ENCODE measurements at regions of chr2 and their contacts with region 1.

Region 1: DNA sequence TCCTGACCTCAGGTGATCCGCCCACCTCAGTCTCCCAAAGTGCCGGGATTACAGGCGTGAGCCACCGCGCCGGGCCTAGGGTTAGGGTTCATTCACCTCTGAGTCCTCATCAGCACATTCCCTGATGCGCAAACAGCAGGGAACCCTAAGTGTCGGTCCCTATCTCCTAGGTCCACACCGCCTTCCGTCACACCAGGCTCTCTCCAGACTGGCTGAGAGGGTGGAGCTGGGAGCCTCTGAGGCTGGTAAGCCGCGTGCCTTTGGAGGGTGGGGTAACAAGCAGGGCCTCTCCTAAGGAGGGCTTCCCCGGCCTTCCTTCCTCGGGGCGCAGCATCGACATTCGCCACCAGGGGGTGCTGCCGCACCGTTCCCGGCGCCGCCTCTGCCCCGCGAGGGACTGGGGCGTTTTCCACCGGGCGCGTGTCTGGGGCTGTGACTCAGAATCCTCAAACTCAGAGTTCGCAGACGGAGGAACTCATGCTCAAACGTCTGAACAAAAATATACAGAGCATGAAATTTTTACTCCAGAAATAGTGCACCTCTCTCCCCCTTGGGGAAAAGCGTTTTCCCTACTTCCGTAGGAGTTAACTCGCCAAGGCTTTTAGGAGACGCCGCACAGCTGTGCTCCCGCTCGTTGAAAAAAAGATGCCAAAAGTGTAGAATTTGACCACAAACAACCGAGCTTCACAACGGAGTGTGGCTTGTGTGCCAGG is 63.9 kb upstream of the ASAP2 start:
- DNase-seq: peak; percentile 72
- ATAC-seq: peak; percentile 94
- H3K4me3 ChIP-seq: peak overlapping the region; percentile 30 to 38
- H3K27ac ChIP-seq: no peak overlapping the region
- H3K4me1 ChIP-seq: peaks cover 18 to 46% of the 10 kb centered on the region in 2 experiments; a peak in 3 of 4 replicates
- H3K27me3 ChIP-seq: no peaks in the 10 kb centered on the region
- CTCF ChIP-seq: peak in 2 of 3 experiments; percentile 90 to 98; a peak in 4 of 6 replicates
- POLR2A ChIP-seq: no peak
- RAD21 ChIP-seq: no peak

Region 2: GRCh38 chr2:7203055-7203467 is 1939.6 kb before region 1 on chr2:
- CTCF ChIA-PET with region 1: no interaction called
- POLR2A ChIA-PET with region 1: no interaction called
- RAD21 ChIA-PET with region 1: no interaction called
- intact Hi-C with region 1: loop called (anchors 10 kb)
- DNase-seq: peak; percentile 24
- ATAC-seq: peak; percentile 71
- H3K4me3 ChIP-seq: no peak overlapping the region
- H3K27ac ChIP-seq: no peak overlapping the region
- H3K4me1 ChIP-seq: no peaks in the 10 kb centered on the region
- H3K27me3 ChIP-seq: no peaks in the 10 kb centered on the region
- CTCF ChIP-seq: peak; percentile 52 to 96 (median 77); a peak in 5 of 6 replicates
- POLR2A ChIP-seq: no peak
- RAD21 ChIP-seq: peak; percentile 73

Region 3: DNA sequence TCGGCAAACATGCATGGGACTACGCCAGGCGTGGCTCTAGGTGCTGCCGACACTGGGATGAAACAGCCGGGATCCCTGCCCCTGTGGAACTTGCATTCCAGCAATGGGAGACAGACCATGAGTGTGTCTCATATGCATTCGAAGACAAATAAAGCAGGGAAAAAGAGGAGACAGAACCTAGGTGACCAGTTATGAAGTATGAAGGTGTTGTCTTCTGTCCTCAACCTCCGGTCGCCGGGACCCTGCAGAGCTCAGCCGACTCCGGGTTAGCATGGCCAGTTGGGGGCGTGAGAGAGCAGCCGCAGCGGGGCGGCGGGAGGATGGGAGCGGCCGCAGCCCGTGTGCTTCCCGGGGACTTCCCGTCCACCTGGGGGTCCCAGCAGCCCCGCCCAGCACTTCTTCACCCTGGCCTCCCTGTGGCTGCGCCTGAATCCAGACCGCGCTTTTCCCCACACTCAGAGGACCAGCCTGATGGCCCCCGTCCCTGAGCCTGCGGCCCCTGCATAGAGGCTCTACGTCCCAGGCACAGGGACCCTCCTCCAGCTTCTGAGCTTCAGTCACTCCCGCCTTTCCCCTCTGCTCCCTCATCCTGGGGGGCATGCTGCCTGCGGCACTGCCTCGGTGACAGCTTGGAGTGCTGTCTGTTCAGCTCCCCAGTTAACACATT is 449.4 kb before region 1 on chr2:
- CTCF ChIA-PET with region 1: interaction called, 4 read pairs
- POLR2A ChIA-PET with region 1: no interaction called
- RAD21 ChIA-PET with region 1: interaction called in 1 of 2 experiments, 4 read pairs
- intact Hi-C with region 1: loop called (anchors 5 kb)
- DNase-seq: no peak
- ATAC-seq: peak; percentile 96
- H3K4me3 ChIP-seq: peak overlapping the region in 1 of 2 experiments; percentile 31; a peak in 1 of 4 replicates
- H3K27ac ChIP-seq: no peak overlapping the region
- H3K4me1 ChIP-seq: peaks cover 0 to 12% of the 10 kb centered on the region in 2 experiments; a peak in 2 of 4 replicates
- H3K27me3 ChIP-seq: no peaks in the 10 kb centered on the region
- CTCF ChIP-seq: peak; percentile 56 to 86 (median 79); a peak in 5 of 6 replicates
- POLR2A ChIP-seq: no peak
- RAD21 ChIP-seq: peak; percentile 78

Region 4: DNA sequence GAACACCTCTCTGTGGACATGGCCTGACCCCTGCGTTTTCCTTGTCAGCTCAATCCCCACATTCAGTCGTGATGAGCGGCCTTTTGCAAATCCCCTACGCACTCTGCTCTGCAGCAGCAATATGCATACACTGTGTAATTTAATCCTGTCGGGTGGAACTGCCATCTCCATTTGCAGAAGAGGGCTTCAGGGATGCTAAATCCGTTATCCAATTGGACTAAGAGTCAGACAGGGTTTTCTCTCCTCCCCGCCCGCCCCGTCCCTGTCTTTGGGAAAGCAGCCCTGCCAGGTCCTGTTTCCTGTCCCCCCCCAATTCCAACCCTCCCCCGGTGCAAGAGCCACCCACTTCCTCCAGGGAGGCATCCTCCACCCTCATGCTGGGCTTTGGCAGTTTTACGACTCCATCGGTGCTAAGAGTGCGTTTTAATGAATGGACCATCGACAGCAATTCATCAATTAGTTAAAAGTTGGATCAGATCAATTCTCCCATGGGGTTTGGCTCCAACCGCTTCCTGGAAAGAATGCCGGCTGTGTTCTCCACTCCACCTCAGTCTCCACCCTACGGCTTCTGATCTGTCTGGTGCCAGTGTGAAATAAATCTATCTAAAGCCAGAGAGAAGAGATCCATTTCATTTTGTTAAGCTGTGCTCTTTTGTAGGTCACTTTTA is 10.4 kb after region 1 on chr2:
- CTCF ChIA-PET with region 1: no interaction called
- POLR2A ChIA-PET with region 1: no interaction called
- RAD21 ChIA-PET with region 1: no interaction called
- intact Hi-C with region 1: no loop called
- DNase-seq: no peak
- ATAC-seq: no peak
- H3K4me3 ChIP-seq: no peak overlapping the region
- H3K27ac ChIP-seq: no peak overlapping the region
- H3K4me1 ChIP-seq: peaks cover 0 to 14% of the 10 kb centered on the region in 2 experiments; a peak in 2 of 4 replicates
- H3K27me3 ChIP-seq: no peaks in the 10 kb centered on the region
- CTCF ChIP-seq: no peak
- POLR2A ChIP-seq: no peak
- RAD21 ChIP-seq: no peak

Region 5: GRCh38 chr2:9205963-9206948 is 63.5 kb after region 1 on chr2 and contains the start of gene ASAP2:
- CTCF ChIA-PET with region 1: no interaction called
- POLR2A ChIA-PET with region 1: no interaction called
- RAD21 ChIA-PET with region 1: no interaction called
- intact Hi-C with region 1: loop called (anchors 2 kb)
- DNase-seq: no peak
- ATAC-seq: peak; percentile 74
- H3K4me3 ChIP-seq: peak within 1 kb of the TSS; percentile 66 to 82
- H3K27ac ChIP-seq: peak within 1 kb of the TSS; percentile 68
- H3K4me1 ChIP-seq: peaks cover 17 to 34% of the 10 kb centered on the region in 2 experiments
- H3K27me3 ChIP-seq: no peaks in the 10 kb centered on the region
- CTCF ChIP-seq: peak; percentile 46 to 79 (median 73); a peak in 4 of 6 replicates
- POLR2A ChIP-seq: peak; percentile 42
- RAD21 ChIP-seq: peak; percentile 70
- total RNA-seq, gene ASAP2: 16.5 TPM

Region 6: GRCh38 chr2:9333591-9334171 is 191.0 kb after region 1 on chr2:
- CTCF ChIA-PET with region 1: interaction called, 39 read pairs
- POLR2A ChIA-PET with region 1: no interaction called
- RAD21 ChIA-PET with region 1: interaction called, 3 to 7 read pairs
- intact Hi-C with region 1: loop called (anchors 1 kb)
- DNase-seq: peak; percentile 53
- ATAC-seq: peak; percentile 95
- H3K4me3 ChIP-seq: no peak overlapping the region
- H3K27ac ChIP-seq: no peak overlapping the region
- H3K4me1 ChIP-seq: peaks cover 17 to 19% of the 10 kb centered on the region in 2 experiments
- H3K27me3 ChIP-seq: no peaks in the 10 kb centered on the region
- CTCF ChIP-seq: peak; percentile 76 to 77 (median 77); a peak in 5 of 6 replicates
- POLR2A ChIP-seq: no peak
- RAD21 ChIP-seq: peak; percentile 96

Region 7: GRCh38 chr2:9423100-9423921 is 280.6 kb after region 1 on chr2 and contains the starts of genes CPSF3 and ITGB1BP1:
- CTCF ChIA-PET with region 1: interaction called, 3 read pairs
- POLR2A ChIA-PET with region 1: no interaction called
- RAD21 ChIA-PET with region 1: no interaction called
- intact Hi-C with region 1: loop called (anchors 1 kb)
- DNase-seq: peak; percentile 94
- ATAC-seq: peak; percentile 88
- H3K4me3 ChIP-seq: peak within 1 kb of the TSS; percentile 57 to 99
- H3K27ac ChIP-seq: peak within 1 kb of the TSS; percentile 84
- H3K4me1 ChIP-seq: peaks cover 13 to 22% of the 10 kb centered on the region in 2 experiments; a peak in 3 of 4 replicates
- H3K27me3 ChIP-seq: no peaks in the 10 kb centered on the region
- CTCF ChIP-seq: no peak
- POLR2A ChIP-seq: peak; percentile 55
- RAD21 ChIP-seq: no peak
- total RNA-seq, gene CPSF3: 68.5 TPM
- total RNA-seq, gene ITGB1BP1: 86.9 TPM

Region 8: DNA sequence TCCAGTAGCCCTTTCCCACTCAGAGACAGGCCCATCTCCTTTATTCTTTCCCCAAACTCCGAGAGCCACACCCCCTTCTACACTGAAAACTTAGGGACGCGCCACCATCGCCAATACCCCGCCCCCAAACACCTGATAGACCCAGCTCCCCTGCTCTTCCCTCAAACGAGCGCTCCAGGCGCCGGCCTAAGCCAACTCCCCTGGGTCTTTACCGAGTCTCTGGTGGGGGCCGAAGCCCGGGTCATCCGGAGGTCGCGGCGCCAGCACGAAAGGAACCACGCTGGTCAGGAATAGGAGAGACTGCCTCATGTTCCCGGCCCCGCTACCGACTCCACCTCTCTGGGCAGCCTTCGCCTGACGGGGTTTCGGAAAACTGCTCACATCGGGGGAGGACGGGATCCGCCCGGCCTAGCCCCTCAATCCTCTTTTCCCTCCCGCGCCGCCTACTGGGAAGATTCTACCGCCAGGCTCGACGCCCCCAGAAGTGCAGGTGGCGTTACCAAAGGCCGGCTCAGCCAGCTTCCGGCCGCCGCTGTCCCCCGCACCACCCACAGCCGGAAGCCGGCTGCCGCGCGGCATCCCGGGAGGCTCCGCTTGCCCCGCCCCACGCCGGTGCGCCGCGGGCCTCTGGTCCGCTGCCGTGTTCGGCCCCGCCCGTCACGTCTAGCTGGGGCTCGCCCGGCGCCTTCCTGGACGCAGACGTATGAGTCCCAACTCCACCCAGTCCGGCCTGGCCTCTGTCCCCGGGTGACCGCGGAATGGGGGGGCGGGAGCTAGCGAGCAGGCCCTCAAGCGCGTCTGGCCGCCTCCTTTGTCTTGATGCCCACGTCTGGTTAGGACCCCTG is 412.8 kb after region 1 on chr2 and contains the start of gene ADAM17:
- CTCF ChIA-PET with region 1: interaction called, 5 read pairs
- POLR2A ChIA-PET with region 1: no interaction called
- RAD21 ChIA-PET with region 1: no interaction called
- intact Hi-C with region 1: loop called (anchors 5 kb)
- DNase-seq: peak; percentile 88
- ATAC-seq: peak; percentile 93
- H3K4me3 ChIP-seq: peak within 1 kb of the TSS; percentile 84 to 91
- H3K27ac ChIP-seq: peak within 1 kb of the TSS; percentile 90
- H3K4me1 ChIP-seq: peaks cover 36 to 65% of the 10 kb centered on the region in 2 experiments
- H3K27me3 ChIP-seq: no peaks in the 10 kb centered on the region
- CTCF ChIP-seq: peak in 1 of 3 experiments; percentile 45; a peak in 3 of 6 replicates
- POLR2A ChIP-seq: peak; percentile 77
- RAD21 ChIP-seq: peak; percentile 15; the same call in 1 of the 2 replicates
- total RNA-seq, gene ADAM17: 39.2 TPM

Measured in HCT116 (cell line).